ENCODE measurements at regions of chr16 and their contacts with region 1.

Region 1: GRCh38 chr16:87571136-87571867 is 31.0 kb upstream of the JPH3 start:
- DNase-seq: peak in 1 of 2 experiments; percentile 85
- H3K4me3 ChIP-seq: no peak overlapping the region
- H3K27ac ChIP-seq: no peak overlapping the region
- H3K4me1 ChIP-seq: peaks cover 3 to 16% (median 9%) of the 10 kb centered on the region in 4 experiments
- H3K27me3 ChIP-seq: no peaks in the 10 kb centered on the region
- CTCF ChIP-seq: peak; percentile 73 to 79 (median 74)
- EP300 ChIP-seq: no peak
- POLR2A ChIP-seq: no peak
- RAD21 ChIP-seq: peak; percentile 58 to 69

Region 2: GRCh38 chr16:87461466-87461991 is 109.8 kb before region 1 on chr16:
- CTCF ChIA-PET with region 1: interaction called, 17 read pairs
- POLR2A ChIA-PET with region 1: interaction called, 4 read pairs
- DNase-seq: peak; percentile 87
- H3K4me3 ChIP-seq: peak overlapping the region in 2 of 4 experiments; percentile 24 to 26; a peak in 4 of 8 replicates
- H3K27ac ChIP-seq: no peak overlapping the region
- H3K4me1 ChIP-seq: peaks cover 2 to 4% (median 3%) of the 10 kb centered on the region in 4 experiments; a peak in 6 of 7 replicates
- H3K27me3 ChIP-seq: no peaks in the 10 kb centered on the region
- CTCF ChIP-seq: peak; percentile 62 to 92 (median 65)
- EP300 ChIP-seq: no peak
- POLR2A ChIP-seq: no peak
- RAD21 ChIP-seq: peak; percentile 58 to 69

Region 3: GRCh38 chr16:87515475-87516330 is 55.6 kb before region 1 on chr16:
- CTCF ChIA-PET with region 1: interaction called, 11 read pairs
- POLR2A ChIA-PET with region 1: no interaction called
- DNase-seq: no peak
- H3K4me3 ChIP-seq: no peak overlapping the region
- H3K27ac ChIP-seq: no peak overlapping the region
- H3K4me1 ChIP-seq: peaks cover 0 to 2% (median 0%) of the 10 kb centered on the region in 4 experiments; a peak in 1 of 7 replicates
- H3K27me3 ChIP-seq: no peaks in the 10 kb centered on the region
- CTCF ChIP-seq: no peak
- EP300 ChIP-seq: no peak
- POLR2A ChIP-seq: no peak
- RAD21 ChIP-seq: no peak

Region 4: DNA sequence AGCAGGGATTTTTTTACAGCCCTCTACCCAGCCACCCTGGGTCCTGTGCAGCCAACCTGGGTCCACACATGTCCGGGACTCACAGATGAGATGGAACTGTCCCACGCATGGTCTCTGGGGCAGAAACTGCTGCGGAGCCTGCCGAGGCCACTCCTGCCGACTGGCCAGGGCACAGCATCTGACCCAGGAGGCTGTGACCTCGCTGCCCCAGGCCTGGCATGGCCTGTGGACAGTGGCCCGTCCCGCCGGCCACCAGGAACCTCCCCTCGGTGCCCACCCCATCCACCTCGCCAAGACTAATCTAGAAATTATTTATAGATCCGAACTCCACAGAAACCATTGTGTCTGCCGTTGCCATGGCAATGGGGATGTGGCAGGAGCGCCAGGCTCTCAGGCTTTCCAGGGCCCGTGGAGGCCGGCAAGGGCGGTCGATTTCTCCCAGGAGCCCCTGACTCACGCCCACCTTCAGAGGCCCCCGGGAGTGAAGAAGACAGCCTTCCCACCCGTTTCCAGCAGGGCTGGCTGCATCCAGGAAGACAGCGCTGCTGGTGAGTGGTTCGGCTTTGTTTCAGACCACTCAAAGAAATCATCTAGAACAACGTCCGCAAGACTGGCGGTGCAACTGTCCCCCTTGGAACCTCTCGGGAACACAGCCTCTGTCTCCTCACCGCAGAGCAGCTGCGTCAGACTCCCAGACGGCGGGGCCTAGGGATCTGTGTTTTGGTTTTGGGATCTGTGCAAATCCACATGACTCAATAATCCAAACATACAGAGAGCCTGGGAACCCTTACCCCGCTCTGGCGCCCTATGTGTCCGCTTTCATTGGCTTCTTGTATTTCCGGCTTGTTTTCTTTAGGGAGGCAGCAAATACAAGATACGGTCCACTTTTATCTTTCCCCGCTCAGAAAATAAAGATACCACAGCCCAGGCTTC is 30.1 kb before region 1 on chr16:
- CTCF ChIA-PET with region 1: interaction called, 14 read pairs
- POLR2A ChIA-PET with region 1: no interaction called
- DNase-seq: no peak
- H3K4me3 ChIP-seq: no peak overlapping the region
- H3K27ac ChIP-seq: no peak overlapping the region
- H3K4me1 ChIP-seq: peaks cover 0 to 8% (median 3%) of the 10 kb centered on the region in 4 experiments; a peak in 2 of 7 replicates
- H3K27me3 ChIP-seq: no peaks in the 10 kb centered on the region
- CTCF ChIP-seq: no peak
- EP300 ChIP-seq: no peak
- POLR2A ChIP-seq: no peak
- RAD21 ChIP-seq: no peak

Region 5: DNA sequence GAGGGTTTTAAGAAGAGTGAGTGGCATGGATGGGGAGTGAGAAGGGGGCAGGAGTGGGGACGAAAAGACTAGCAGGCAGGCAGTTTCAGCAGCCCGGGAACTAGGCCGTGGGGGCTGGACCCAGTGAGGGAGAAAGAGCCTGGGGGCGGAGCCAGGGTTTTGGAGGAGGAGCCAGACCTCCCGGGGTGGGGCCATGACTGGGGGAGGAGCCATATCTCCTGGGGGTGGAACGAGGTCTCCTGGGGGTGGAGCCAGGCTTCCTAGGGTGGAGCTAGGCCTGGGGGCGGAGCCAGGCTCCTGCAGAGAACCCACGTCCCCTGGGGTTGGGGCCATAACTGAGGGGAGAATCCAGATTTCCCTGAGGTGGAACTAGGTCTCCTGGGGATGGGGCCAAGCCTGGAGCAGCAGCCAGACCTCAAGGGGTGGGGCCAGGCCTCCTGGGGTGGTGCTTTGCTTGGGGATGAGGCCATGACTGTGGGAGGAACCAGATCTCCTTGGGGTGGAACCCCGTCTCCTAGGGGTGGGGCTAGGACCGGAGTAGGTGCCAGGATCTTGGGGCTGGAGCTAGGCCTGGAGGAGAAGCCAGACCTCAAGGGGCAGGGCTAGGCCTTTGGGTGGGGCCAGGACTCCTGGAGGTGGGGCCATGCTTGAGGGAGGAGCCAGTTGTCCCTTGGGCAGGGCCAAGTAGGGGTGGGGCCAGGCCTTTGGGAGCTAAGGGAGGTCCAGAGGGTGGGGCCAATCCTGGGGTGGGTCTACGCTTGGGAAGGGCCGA is 10.7 kb before region 1 on chr16:
- CTCF ChIA-PET with region 1: interaction called, 45 read pairs
- POLR2A ChIA-PET with region 1: interaction called, 3 read pairs
- DNase-seq: peak; percentile 47 to 91
- H3K4me3 ChIP-seq: no peak overlapping the region
- H3K27ac ChIP-seq: no peak overlapping the region
- H3K4me1 ChIP-seq: peaks cover 0 to 6% (median 0%) of the 10 kb centered on the region in 4 experiments; a peak in 2 of 7 replicates
- H3K27me3 ChIP-seq: no peaks in the 10 kb centered on the region
- CTCF ChIP-seq: no peak
- EP300 ChIP-seq: no peak
- POLR2A ChIP-seq: no peak
- RAD21 ChIP-seq: no peak

Region 6: DNA sequence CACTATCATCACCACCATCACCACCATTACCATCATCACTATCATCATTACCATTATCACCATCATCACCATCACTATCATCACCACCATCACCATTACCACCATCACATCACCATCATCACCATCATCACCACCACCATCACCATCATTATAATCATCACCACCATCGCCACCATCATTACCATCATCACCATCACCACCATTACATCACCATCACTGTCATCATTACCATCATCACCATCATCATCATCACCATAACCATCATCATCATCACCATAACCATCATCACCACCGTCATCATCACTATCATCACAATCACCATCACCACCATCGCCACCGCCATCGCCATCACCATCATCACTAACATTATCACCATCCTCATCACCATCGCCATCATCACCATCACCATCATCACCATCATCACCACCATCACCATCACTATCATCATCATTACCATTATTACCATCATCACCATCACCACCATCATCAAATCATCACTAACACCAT is 26.1 kb after region 1 on chr16:
- CTCF ChIA-PET with region 1: no interaction called
- POLR2A ChIA-PET with region 1: no interaction called
- DNase-seq: no peak
- H3K4me3 ChIP-seq: no peak overlapping the region
- H3K27ac ChIP-seq: no peak overlapping the region
- H3K4me1 ChIP-seq: peaks cover 0 to 4% (median 0%) of the 10 kb centered on the region in 4 experiments; a peak in 3 of 7 replicates
- H3K27me3 ChIP-seq: peaks cover 0 to 2% (median 0%) of the 10 kb centered on the region in 4 experiments; a peak in 4 of 7 replicates
- CTCF ChIP-seq: no peak
- EP300 ChIP-seq: no peak
- POLR2A ChIP-seq: no peak
- RAD21 ChIP-seq: no peak

Region 7: DNA sequence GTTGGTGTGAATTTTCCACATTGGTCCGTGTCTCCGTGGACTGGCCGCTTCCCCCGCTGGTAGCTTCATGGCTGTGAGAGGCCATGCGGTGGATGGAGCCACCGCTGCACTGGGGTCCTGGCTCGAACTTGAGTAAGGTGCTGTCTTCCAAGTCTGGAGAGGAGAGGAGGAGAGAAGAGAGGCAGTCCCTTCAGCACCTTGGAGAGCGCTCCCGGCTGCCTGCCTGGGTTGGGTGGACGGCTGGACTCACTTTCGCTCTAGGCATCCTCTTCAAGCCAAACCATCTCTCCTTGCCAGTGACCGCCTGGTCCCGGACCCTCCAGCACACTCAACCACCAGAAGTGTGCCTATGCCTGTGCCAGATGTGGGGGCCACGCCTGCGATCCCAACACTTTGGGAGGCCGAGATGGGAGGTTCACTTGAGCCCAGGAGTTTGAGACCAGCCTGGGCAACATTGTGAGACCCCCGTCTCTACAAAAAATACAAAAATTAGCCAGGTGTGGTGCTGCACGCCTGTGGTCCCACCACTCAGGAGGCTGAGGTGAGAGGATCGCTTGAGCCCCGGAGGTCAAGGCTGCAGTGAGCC is 37.2 kb after region 1 on chr16:
- CTCF ChIA-PET with region 1: interaction called, 11 read pairs
- POLR2A ChIA-PET with region 1: interaction called, 3 read pairs
- DNase-seq: peak in 1 of 2 experiments; percentile 90
- H3K4me3 ChIP-seq: no peak overlapping the region
- H3K27ac ChIP-seq: no peak overlapping the region
- H3K4me1 ChIP-seq: peaks cover 0 to 7% (median 4%) of the 10 kb centered on the region in 4 experiments; a peak in 5 of 7 replicates
- H3K27me3 ChIP-seq: peaks cover 0 to 6% (median 0%) of the 10 kb centered on the region in 4 experiments; a peak in 2 of 7 replicates
- CTCF ChIP-seq: no peak
- EP300 ChIP-seq: no peak
- POLR2A ChIP-seq: no peak
- RAD21 ChIP-seq: no peak

Region 8: DNA sequence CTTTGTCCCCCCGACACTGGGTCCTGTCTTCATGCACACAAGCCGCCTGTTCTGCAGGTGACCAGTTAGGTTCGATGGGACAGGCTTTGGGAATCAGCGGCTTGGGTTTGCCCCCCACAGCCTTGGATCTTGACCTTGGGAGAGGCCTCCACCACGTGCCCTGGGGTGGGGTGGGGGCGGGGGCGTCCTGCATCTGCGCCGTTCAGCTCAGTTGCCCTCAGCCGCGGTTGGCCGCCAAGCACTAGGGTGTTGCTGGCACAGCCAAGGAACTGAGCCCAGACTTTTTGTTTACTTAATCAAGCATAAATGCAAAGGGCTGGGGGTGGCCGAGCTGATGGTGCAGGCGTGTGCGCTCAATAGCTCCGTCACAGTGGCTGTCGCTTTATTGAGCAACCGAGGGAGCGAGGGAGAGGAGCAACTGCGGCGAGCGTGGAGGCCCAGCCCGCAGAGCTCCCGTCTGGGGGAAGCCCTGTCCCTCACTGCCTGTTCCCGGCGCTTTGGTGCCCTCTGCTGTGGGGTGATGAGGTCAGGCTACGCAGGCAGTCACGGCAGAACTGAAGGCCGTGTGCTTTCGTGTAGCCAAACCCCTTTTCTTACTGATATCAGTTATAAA is 64.9 kb after region 1 on chr16:
- CTCF ChIA-PET with region 1: interaction called, 64 read pairs
- POLR2A ChIA-PET with region 1: no interaction called
- DNase-seq: peak; percentile 43 to 88
- H3K4me3 ChIP-seq: no peak overlapping the region
- H3K27ac ChIP-seq: no peak overlapping the region
- H3K4me1 ChIP-seq: peaks cover 0 to 4% (median 2%) of the 10 kb centered on the region in 4 experiments; a peak in 4 of 7 replicates
- H3K27me3 ChIP-seq: no peaks in the 10 kb centered on the region; a peak in 2 of 7 replicates
- CTCF ChIP-seq: peak; percentile 84 to 91 (median 87)
- EP300 ChIP-seq: no peak
- POLR2A ChIP-seq: no peak
- RAD21 ChIP-seq: peak; percentile 89 to 91

Measured in H1 (cell line).